Calu3 (cell line): ENCODE measurements at regions of chr14 and their contacts with region 1.

Region 1: GRCh38 chr14:55094321-55095157 is 34.5 kb upstream of the LGALS3 start:
- DNase-seq: no peak
- H3K4me3 Mint-ChIP-seq: no peak overlapping the region
- H3K27ac Mint-ChIP-seq: no peak overlapping the region
- H3K4me1 Mint-ChIP-seq: peaks cover 43% of the 10 kb centered on the region
- H3K27me3 Mint-ChIP-seq: no peaks in the 10 kb centered on the region
- CTCF ChIP-seq: no peak

Region 2: DNA sequence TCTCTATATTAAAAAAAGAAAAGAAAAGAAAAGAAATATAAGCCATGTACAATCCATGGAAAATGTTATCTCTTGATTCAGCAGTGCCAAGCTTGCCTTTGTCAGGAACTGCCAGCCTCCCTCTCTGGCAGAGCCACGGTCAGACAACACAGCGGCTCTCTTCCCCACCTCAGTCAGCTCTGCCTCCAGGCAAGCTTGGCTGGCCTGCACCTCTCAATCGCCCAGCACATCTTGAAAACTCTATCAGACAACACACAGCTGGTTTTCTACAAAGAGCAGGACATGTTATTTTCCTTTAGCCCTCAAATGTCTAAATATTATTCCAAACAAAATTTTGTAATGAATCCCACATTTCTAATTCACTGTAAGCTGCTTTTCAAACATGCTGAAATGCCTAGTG is 171.9 kb before region 1 on chr14:
- CTCF ChIA-PET with region 1: no interaction called
- intact Hi-C with region 1: no loop called
- DNase-seq: no peak
- H3K4me3 Mint-ChIP-seq: no peak overlapping the region
- H3K27ac Mint-ChIP-seq: no peak overlapping the region
- H3K4me1 Mint-ChIP-seq: no peaks in the 10 kb centered on the region
- H3K27me3 Mint-ChIP-seq: no peaks in the 10 kb centered on the region
- CTCF ChIP-seq: no peak

Region 3: DNA sequence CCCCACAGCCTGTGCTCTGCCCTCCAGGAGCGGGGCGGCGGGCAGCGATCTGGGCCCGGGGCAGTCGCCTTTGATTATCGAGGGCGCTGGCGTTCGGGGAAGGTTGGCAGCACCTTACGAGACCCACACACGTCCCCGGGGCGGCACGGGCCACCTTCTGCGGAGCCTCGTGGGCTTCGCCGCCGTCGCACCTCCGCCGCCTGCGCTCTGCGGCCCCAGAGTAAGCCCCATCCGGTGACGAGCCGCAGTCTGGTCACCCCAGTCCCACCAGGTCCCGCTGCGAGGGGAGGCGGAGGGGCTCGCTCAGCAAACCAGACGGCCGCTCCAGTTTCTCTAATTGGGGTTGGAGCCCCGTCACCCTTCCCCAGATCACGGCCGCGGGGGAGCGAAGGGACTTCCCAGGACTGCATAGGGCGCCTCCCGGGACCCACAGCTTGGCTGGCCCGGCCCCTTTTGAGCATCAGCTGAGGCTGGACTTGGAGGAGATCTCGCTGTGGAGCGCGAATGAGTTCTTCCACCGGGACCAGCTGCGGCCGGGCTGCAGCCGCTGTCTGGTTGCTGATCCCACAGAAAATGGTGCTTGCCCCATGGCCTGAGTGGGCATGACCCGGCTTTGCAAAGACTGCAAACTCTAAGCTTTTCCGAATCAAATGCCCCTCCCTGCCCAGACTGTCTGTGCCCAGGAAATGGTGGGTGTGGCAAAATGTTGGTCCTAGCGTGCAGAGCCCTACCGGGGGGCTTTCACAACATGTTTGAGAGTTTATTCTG is 35.1 kb after region 1 on chr14:
- CTCF ChIA-PET with region 1: interaction called, 7 read pairs
- intact Hi-C with region 1: loop called (anchors 1 kb)
- DNase-seq: peak; percentile 58
- H3K4me3 Mint-ChIP-seq: peak overlapping the region; percentile 80
- H3K27ac Mint-ChIP-seq: peak overlapping the region; percentile 83
- H3K4me1 Mint-ChIP-seq: peaks cover 37% of the 10 kb centered on the region
- H3K27me3 Mint-ChIP-seq: no peaks in the 10 kb centered on the region
- CTCF ChIP-seq: no peak

Region 4: DNA sequence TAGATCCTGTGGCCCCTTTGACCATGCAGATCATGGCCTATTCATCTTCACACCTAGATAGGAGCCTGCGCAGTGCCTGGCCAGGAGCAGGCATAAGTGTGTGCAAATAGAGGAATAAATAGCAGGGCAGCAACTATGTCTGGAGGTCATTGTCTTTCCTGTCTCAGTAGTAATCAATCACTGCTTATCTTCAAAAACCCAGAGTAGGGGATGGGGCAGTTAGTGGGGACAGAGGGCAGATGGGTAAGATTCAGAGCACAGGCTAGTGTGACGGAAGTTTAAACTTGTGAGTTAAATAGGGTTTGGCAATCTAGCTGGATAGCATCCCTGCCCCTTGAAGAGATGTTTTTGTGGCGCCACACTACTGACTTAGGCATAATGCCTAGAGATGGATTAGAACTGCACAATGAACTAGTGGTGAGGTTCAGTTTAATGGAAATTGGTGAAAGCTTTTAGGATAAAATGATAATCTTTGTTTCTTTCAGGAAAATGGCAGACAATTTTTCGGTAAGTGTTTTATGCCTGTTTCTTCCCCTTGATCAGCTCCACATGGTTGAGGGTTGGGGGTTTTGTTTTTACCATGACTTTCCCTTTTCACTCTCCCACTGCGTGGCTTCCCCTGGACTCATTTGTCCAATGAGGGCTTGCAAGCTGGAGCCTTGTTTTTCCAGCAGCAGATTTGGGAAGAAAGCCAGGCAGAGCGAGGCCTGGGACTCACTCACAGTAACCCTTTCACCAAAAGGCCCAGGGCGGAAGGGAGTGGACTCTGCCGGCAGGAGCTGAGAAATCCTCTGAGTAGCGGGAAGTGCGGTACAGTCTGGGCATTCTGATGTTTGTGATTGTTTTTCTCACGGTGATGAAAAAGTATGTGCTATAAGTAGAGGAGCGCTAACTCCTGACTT is 42.6 kb after region 1 on chr14:
- CTCF ChIA-PET with region 1: interaction called, 7 read pairs
- intact Hi-C with region 1: loop called (anchors 1 kb)
- DNase-seq: peak; percentile 38
- H3K4me3 Mint-ChIP-seq: peak overlapping the region; percentile 64
- H3K27ac Mint-ChIP-seq: peak overlapping the region; percentile 61
- H3K4me1 Mint-ChIP-seq: peaks cover 48% of the 10 kb centered on the region
- H3K27me3 Mint-ChIP-seq: no peaks in the 10 kb centered on the region
- CTCF ChIP-seq: no peak

Region 5: GRCh38 chr14:55430024-55430690 is 335.6 kb after region 1 on chr14:
- CTCF ChIA-PET with region 1: no interaction called
- intact Hi-C with region 1: no loop called
- DNase-seq: peak; percentile 62
- H3K4me3 Mint-ChIP-seq: no peak overlapping the region
- H3K27ac Mint-ChIP-seq: no peak overlapping the region
- H3K4me1 Mint-ChIP-seq: peaks cover 13% of the 10 kb centered on the region
- H3K27me3 Mint-ChIP-seq: no peaks in the 10 kb centered on the region
- CTCF ChIP-seq: peak; percentile 25